ENCODE measurements at regions of chrX and their contacts with region 1.

Region 1: DNA sequence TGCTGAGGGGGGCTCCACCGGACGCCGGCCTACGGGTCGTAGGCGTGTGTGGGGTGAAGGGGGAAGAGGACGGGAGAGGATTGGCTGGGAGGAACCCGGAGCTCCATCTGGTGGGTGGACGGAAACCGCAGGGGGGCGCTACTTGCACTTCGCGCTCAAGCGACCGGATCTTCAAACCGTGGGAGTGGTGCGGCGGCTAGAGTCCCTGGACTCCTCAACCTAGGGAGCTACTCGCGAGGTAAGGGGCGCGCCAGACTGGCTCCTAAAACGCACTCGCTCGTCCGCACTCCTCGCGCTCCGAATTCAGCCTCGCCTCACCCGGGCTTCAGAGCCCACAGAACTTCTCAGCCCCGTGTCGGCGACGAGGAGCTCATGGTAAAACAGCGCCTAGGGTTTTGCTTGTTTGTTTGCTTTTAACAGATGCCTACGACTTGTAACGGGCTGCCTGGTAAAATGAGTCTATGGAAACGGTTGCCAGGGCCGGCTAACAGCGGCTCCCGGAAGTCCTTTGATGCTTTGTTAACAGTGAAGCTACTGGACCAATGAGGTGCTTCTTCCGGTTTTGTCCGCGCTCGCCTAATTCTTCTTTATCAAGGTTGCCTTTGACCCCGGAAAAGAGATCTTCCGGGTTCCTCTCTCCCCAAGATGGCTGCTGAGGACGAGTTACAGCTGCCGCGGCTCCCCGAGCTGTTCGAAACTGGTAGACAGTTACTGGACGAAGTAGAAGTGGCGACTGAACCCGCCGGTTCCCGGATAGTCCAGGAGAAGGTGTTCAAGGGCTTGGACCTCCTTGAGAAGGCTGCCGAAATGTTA is at the start of gene IGBP1:
- DNase-seq: peak; percentile 77
- ATAC-seq: peak; percentile 87
- H3K4me3 ChIP-seq: peak within 1 kb of the TSS; percentile 85 to 93
- H3K27ac ChIP-seq: peak within 1 kb of the TSS; percentile 94
- H3K4me1 ChIP-seq: peaks cover 12 to 35% of the 10 kb centered on the region in 2 experiments; a peak in 3 of 4 replicates
- H3K27me3 ChIP-seq: no peaks in the 10 kb centered on the region
- CTCF ChIP-seq: peak; percentile 46 to 60 (median 48)
- POLR2A ChIP-seq: no peak
- RAD21 ChIP-seq: peak; percentile 53
- total RNA-seq, gene IGBP1: 50.7 TPM

Region 2: DNA sequence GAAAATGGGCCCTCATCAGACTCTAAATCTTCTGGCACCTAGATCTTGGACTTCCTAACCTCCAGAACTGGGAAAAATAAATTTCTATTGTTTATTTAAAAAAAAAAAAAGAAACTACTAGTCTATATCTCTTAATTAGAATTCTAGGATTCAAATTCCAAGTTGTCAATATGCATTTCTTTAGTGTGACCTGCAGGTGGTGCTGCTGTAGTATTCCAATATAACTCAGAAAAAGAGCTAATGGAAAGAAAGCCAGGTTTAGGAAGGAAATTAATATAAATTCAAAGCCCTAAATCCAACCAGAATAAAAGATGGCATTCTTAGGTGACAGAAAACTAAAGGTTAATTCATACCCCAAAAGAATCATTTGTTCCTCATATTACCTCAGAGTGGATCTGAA is 709.3 kb before region 1 on chrX:
- CTCF ChIA-PET with region 1: interaction called, 11 read pairs
- POLR2A ChIA-PET with region 1: no interaction called
- RAD21 ChIA-PET with region 1: no interaction called
- intact Hi-C with region 1: no loop called
- DNase-seq: peak; percentile 2
- ATAC-seq: no peak
- H3K4me3 ChIP-seq: no peak overlapping the region
- H3K27ac ChIP-seq: no peak overlapping the region
- H3K4me1 ChIP-seq: no peaks in the 10 kb centered on the region
- H3K27me3 ChIP-seq: peaks cover 22% of the 10 kb centered on the region
- CTCF ChIP-seq: peak; percentile 15 to 34 (median 21); a peak in 3 of 6 replicates
- POLR2A ChIP-seq: no peak
- RAD21 ChIP-seq: peak; percentile 44

Region 3: GRCh38 chrX:70262952-70263567 is 129.6 kb after region 1 on chrX:
- CTCF ChIA-PET with region 1: interaction called, 20 read pairs
- POLR2A ChIA-PET with region 1: no interaction called
- RAD21 ChIA-PET with region 1: no interaction called
- intact Hi-C with region 1: loop called (anchors 2 kb)
- DNase-seq: no peak
- ATAC-seq: peak; percentile 97
- H3K4me3 ChIP-seq: no peak overlapping the region
- H3K27ac ChIP-seq: no peak overlapping the region
- H3K4me1 ChIP-seq: peaks cover 0 to 3% of the 10 kb centered on the region in 2 experiments; a peak in 1 of 4 replicates
- H3K27me3 ChIP-seq: no peaks in the 10 kb centered on the region
- CTCF ChIP-seq: peak; percentile 60 to 66 (median 66); a peak in 5 of 6 replicates
- POLR2A ChIP-seq: no peak
- RAD21 ChIP-seq: peak; percentile 79

Region 4: DNA sequence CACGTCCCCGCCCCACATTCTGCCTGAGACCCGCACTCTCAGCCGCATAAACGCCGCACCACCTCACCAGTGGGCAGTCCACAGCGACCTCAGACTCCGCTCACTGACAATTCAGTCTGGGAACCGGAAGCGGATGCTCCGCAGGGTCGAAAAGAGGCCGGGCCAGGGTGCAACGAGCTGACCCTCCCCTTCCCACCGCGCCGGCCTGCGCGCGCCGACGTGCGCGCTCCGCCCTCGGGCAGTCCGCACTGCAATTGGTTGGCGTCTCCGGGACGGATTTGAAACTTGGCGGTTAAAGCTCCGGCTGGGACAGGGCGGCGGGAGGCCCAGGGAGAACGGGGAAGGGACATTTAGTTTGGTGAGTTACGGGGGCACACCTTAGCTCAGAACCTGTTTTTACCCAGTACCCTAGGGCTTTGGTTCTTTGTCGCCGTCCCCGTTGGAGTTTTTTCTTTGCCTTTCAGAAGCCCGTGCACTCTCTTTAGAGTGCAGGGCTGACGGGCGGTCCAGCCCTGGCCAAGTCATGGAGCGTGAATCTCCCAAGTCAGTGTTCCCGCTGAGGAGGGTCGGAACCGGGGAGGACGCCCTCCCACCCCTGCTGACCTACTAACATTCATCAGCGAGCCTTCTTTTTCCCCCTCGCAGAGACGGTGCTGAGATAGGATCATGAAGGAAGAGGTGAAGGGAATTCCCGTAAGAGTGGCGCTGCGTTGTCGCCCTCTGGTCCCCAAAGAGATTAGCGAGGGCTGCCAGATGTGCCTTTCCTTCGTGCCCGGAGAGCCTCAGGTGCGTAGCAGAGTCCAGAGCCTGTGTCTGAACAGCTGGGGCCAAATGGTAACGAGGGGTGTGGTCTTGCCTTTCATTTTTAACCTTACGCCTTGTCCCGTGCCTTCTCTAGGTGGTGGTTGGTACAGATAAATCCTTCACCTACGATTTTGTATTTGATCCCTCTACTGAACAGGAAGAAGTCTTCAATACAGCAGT is 156.6 kb after region 1 on chrX and contains the starts of genes KIF4A and PDZD11:
- CTCF ChIA-PET with region 1: interaction called, 5 read pairs
- POLR2A ChIA-PET with region 1: no interaction called
- RAD21 ChIA-PET with region 1: interaction called in 1 of 2 experiments, 4 read pairs
- intact Hi-C with region 1: loop called (anchors 5 kb)
- DNase-seq: peak; percentile 63
- ATAC-seq: peak; percentile 98
- H3K4me3 ChIP-seq: peak within 1 kb of the TSS; percentile 75 to 77
- H3K27ac ChIP-seq: peak within 1 kb of the TSS; percentile 71
- H3K4me1 ChIP-seq: peaks cover 3 to 5% of the 10 kb centered on the region in 2 experiments; a peak in 1 of 4 replicates
- H3K27me3 ChIP-seq: no peaks in the 10 kb centered on the region
- CTCF ChIP-seq: no peak
- POLR2A ChIP-seq: peak; percentile 71
- RAD21 ChIP-seq: no peak
- total RNA-seq, gene KIF4A: 40.3 TPM
- total RNA-seq, gene PDZD11: 29.6 TPM